ENCODE measurements at regions of chr13 and their contacts with region 1.

Region 1: DNA sequence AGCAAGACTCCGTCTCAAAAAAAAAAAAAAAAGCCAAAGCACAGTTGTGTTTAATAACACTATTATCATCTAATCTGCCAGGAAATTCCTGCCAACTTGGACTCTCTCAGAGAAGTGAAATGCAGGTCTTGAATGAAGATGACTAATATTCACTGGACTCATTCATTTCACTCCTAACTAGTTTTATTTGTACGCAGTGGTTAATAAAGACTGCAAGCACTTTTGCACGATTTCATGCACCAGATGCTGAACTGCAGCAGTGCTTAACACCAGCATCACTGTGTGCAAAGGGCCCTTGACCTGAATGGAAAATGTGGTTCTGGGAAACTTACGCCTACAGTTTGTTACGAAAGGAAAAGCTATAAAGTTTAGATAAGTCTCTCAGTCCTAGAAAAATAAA is 63.3 kb downstream of the DHRS12 start:
- DNase-seq: peak; percentile 55
- H3K4me3 ChIP-seq: no peak overlapping the region
- H3K27ac ChIP-seq: no peak overlapping the region
- H3K4me1 ChIP-seq: peaks cover 4% of the 10 kb centered on the region
- H3K27me3 ChIP-seq: no peaks in the 10 kb centered on the region
- CTCF ChIP-seq: no peak
- POLR2A ChIP-seq: no peak

Region 2: GRCh38 chr13:51612867-51613266 is 127.8 kb before region 1 on chr13:
- CTCF ChIA-PET with region 1: no interaction called
- POLR2A ChIA-PET with region 1: no interaction called
- dilution Hi-C with region 1: no loop called
- intact Hi-C with region 1: no loop called
- DNase-seq: no peak
- H3K4me3 ChIP-seq: no peak overlapping the region
- H3K27ac ChIP-seq: no peak overlapping the region
- H3K4me1 ChIP-seq: peaks cover 4% of the 10 kb centered on the region
- H3K27me3 ChIP-seq: no peaks in the 10 kb centered on the region
- CTCF ChIP-seq: no peak
- POLR2A ChIP-seq: no peak

Region 3: GRCh38 chr13:51729866-51730546 is 10.7 kb before region 1 on chr13:
- CTCF ChIA-PET with region 1: interaction called, 11 read pairs
- POLR2A ChIA-PET with region 1: no interaction called
- dilution Hi-C with region 1: no loop called
- intact Hi-C with region 1: no loop called
- DNase-seq: peak; percentile 71
- H3K4me3 ChIP-seq: no peak overlapping the region
- H3K27ac ChIP-seq: no peak overlapping the region
- H3K4me1 ChIP-seq: peaks cover 14% of the 10 kb centered on the region
- H3K27me3 ChIP-seq: no peaks in the 10 kb centered on the region
- CTCF ChIP-seq: no peak
- POLR2A ChIP-seq: no peak